ENCODE measurements at regions of chr10 and their contacts with region 1.

Region 1: GRCh38 chr10:71812016-71812912 is 38.8 kb downstream of the PSAP start:
- DNase-seq: peak; percentile 62 to 82 (median 78)
- H3K4me3 ChIP-seq: peak overlapping the region in 1 of 7 experiments; percentile 10
- H3K27ac ChIP-seq: no peak overlapping the region
- H3K4me1 ChIP-seq: peaks cover 0 to 18% (median 10%) of the 10 kb centered on the region in 4 experiments
- H3K27me3 ChIP-seq: no peaks in the 10 kb centered on the region

Region 2: DNA sequence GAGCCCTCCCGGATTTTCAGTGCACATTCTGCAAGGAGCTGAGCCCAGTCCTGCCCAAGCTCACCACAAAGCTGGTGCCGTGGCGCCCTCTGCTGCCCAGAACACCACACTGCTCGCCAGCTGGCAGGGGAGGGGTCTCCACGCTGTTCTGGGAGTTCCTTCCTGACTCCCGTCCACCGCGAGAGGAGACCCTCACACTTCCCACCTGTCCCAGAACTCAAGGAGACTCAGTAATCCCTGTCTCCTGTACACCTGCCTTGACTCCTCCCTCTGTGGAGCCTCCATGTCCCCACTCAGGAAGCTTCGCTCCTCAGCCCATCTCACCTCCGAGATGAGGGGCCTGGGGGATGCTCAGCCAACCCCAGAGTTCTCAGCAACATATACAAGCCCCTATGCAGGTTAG is 104.0 kb before region 1 on chr10:
- CTCF ChIA-PET with region 1: interaction called, 32 read pairs
- POLR2A ChIA-PET with region 1: no interaction called
- DNase-seq: peak; percentile 41 to 54 (median 54)
- H3K4me3 ChIP-seq: no peak overlapping the region
- H3K27ac ChIP-seq: no peak overlapping the region
- H3K4me1 ChIP-seq: peaks cover 0 to 45% (median 17%) of the 10 kb centered on the region in 4 experiments
- H3K27me3 ChIP-seq: no peaks in the 10 kb centered on the region

Region 3: GRCh38 chr10:71713135-71714030 is 98.9 kb before region 1 on chr10:
- CTCF ChIA-PET with region 1: interaction called, 32 read pairs
- POLR2A ChIA-PET with region 1: no interaction called
- DNase-seq: peak in 2 of 3 donors; percentile 67 to 73
- H3K4me3 ChIP-seq: peak overlapping the region in 2 of 7 experiments; percentile 3 to 19
- H3K27ac ChIP-seq: peak overlapping the region in 1 of 2 experiments; percentile 52
- H3K4me1 ChIP-seq: peaks cover 7 to 69% (median 40%) of the 10 kb centered on the region in 4 experiments
- H3K27me3 ChIP-seq: no peaks in the 10 kb centered on the region

Region 4: DNA sequence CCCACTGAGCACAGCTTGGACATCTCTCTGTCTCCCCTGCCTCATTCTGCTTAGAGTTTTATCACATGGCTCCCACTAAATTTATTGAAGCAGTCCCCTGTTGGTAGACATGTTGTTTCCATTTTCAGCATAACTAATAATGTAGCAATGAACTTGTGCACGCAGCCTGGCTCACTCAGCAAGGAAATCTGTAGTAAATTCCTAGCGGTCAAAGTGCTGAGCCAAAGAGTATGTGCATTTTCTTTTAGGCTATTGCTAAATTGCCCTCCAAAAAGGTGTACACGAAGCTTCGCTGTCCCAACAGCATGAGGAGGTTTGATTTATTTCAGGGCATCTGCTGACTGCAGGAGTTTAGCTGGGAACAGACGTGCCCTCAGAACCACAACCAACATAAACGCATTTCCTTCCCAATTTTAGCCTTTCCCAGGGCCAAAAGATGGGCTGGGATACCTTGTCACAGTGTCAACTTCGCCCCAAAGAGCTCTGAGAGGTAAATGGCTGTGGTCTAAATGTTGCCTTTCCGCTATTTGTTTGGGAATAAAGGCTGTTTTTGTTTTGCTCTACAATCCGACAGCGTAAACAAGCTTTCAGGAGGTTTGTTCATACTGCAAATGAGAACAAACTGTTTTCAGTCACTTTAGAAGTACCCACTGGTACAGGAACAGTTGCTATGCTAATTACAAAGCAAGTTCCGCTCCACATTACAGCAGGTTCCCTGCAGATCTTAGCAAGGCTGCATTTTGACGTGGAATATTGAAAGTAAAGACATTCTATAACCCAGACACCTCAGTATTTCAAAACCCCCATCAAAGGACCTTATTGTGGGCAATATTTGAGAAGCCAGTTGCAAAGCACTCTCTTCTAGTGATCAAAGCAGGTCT is 55.7 kb before region 1 on chr10:
- CTCF ChIA-PET with region 1: interaction called, 10 read pairs
- POLR2A ChIA-PET with region 1: no interaction called
- DNase-seq: peak in 2 of 3 donors; percentile 75 to 80
- H3K4me3 ChIP-seq: peak overlapping the region in 4 of 7 experiments; percentile 34 to 45 (median 40)
- H3K27ac ChIP-seq: peak overlapping the region; percentile 30 to 63
- H3K4me1 ChIP-seq: peaks cover 52 to 88% (median 87%) of the 10 kb centered on the region in 4 experiments
- H3K27me3 ChIP-seq: no peaks in the 10 kb centered on the region

Region 5: DNA sequence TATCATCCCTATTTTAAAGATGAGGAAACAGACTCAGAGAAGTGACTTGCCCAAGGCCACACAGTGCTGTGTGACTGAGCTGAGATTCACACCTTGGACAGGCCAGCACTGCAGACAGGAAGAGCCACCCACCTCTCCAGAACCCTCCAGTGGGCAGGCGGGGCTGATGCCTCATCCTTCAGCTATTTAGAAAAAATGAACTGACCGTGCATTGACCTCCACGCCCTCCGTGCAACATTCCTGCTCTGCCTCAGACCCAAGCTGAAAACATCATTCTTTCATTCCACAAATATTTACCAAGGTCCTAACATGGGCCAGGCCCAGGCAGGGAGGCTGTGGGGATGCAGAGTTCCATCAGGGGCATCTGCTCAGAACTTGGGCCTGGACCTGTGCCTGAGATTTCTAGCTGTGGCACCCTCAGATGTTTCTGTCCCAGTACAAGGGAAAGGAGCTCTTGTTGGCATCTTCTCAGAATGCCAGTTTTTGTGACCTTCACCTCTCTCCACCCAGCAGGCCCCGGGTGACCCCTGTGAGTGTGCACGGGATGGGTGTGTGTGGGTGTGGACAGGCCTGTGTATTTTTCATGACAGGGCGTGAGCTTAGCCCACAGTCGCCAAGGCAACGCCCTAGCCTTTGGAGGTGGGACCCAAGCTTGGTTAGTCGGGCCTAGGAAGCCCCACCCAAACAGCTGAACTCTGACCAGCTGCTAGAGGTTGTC is 45.4 kb before region 1 on chr10:
- CTCF ChIA-PET with region 1: interaction called, 133 read pairs
- POLR2A ChIA-PET with region 1: no interaction called
- DNase-seq: peak in 1 of 3 donors; percentile 28
- H3K4me3 ChIP-seq: no peak overlapping the region
- H3K27ac ChIP-seq: peak overlapping the region in 1 of 2 experiments; percentile 35
- H3K4me1 ChIP-seq: peaks cover 27 to 83% (median 71%) of the 10 kb centered on the region in 4 experiments
- H3K27me3 ChIP-seq: no peaks in the 10 kb centered on the region

Region 6: GRCh38 chr10:71797533-71798333 is 14.5 kb before region 1 on chr10:
- CTCF ChIA-PET with region 1: interaction called, 13 read pairs
- POLR2A ChIA-PET with region 1: interaction called, 3 read pairs
- DNase-seq: peak; percentile 97 to 100 (median 99)
- H3K4me3 ChIP-seq: peak overlapping the region in 3 of 7 experiments; percentile 12 to 35 (median 21)
- H3K27ac ChIP-seq: peak overlapping the region; percentile 48 to 74
- H3K4me1 ChIP-seq: peaks cover 10 to 71% (median 60%) of the 10 kb centered on the region in 4 experiments
- H3K27me3 ChIP-seq: no peaks in the 10 kb centered on the region

Region 7: GRCh38 chr10:71829171-71829570 is 16.9 kb after region 1 on chr10:
- CTCF ChIA-PET with region 1: interaction called, 15 read pairs
- POLR2A ChIA-PET with region 1: no interaction called
- DNase-seq: peak; percentile 37 to 76 (median 70)
- H3K4me3 ChIP-seq: no peak overlapping the region
- H3K27ac ChIP-seq: no peak overlapping the region
- H3K4me1 ChIP-seq: peaks cover 0 to 2% (median 0%) of the 10 kb centered on the region in 4 experiments
- H3K27me3 ChIP-seq: no peaks in the 10 kb centered on the region

Measured in common myeloid progenitor, CD34-positive (primary cell).